Caco-2 (cell line): ENCODE measurements at regions of chrX and their contacts with region 1.

Region 1: DNA sequence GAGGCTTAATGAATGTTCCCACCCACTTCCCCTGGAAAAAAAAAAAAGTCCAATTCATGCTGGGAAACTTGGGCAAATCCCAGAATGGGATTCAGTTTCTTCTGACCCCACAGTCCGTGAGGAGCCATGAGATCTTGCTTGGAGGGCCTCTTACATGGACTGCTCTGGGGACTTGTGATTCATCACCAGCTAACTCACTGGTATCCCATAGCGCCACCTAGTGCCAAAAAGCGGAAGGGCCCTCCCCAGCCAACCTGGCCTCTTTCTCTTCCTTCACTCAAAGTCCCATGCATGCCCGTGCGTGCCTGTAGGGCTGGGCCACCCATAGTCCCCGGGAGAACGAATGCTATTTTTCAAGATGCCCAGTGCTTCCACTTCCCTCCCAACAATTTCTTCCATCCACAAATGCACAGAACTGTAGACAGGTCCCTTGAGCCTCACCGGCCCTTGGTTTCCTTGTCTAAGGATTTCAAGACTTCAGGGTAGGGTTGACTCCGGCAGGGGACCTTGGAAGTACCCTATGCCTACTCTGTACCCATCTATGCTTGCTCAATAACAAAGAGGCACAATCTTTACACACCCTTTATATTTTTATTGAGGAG is 5.1 kb downstream of the RTL5 start:
- DNase-seq: peak; percentile 77 to 81
- H3K4me3 ChIP-seq: no peak overlapping the region
- H3K4me3 Mint-ChIP-seq: no peak overlapping the region
- H3K27ac Mint-ChIP-seq: no peak overlapping the region
- H3K4me1 ChIP-seq: no peaks in the 10 kb centered on the region
- H3K4me1 Mint-ChIP-seq: no peaks in the 10 kb centered on the region
- H3K27me3 ChIP-seq: no peaks in the 10 kb centered on the region
- H3K27me3 Mint-ChIP-seq: peaks cover 4% of the 10 kb centered on the region
- CTCF ChIP-seq: peak; percentile 50 to 78

Region 2: DNA sequence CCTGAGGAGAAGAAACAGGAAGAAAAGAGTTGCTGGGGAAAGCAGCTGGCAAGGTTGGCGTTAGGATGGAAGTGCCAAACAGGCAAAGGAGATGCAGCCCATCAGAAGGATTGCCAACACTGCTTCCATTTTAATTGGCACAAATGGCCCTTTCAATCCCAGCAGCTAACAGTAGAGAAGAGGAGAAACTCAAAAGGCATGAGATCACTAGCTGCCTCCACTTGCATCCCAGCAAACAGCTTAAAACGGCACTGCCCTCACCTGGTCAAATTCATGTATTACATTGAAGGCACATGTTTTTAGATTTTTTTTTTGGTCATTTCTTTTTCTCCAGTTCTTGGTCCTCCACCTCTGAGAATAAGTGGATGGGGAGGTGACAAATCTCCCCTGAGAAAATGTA is 474.2 kb before region 1 on chrX:
- CTCF ChIA-PET with region 1: no interaction called
- POLR2A ChIA-PET with region 1: no interaction called
- intact Hi-C with region 1: no loop called
- DNase-seq: peak; percentile 47 to 52
- H3K4me3 ChIP-seq: no peak overlapping the region
- H3K4me3 Mint-ChIP-seq: no peak overlapping the region
- H3K27ac Mint-ChIP-seq: no peak overlapping the region
- H3K4me1 ChIP-seq: no peaks in the 10 kb centered on the region
- H3K4me1 Mint-ChIP-seq: no peaks in the 10 kb centered on the region
- H3K27me3 ChIP-seq: no peaks in the 10 kb centered on the region
- H3K27me3 Mint-ChIP-seq: no peaks in the 10 kb centered on the region
- CTCF ChIP-seq: peak; percentile 35 to 53

Region 3: DNA sequence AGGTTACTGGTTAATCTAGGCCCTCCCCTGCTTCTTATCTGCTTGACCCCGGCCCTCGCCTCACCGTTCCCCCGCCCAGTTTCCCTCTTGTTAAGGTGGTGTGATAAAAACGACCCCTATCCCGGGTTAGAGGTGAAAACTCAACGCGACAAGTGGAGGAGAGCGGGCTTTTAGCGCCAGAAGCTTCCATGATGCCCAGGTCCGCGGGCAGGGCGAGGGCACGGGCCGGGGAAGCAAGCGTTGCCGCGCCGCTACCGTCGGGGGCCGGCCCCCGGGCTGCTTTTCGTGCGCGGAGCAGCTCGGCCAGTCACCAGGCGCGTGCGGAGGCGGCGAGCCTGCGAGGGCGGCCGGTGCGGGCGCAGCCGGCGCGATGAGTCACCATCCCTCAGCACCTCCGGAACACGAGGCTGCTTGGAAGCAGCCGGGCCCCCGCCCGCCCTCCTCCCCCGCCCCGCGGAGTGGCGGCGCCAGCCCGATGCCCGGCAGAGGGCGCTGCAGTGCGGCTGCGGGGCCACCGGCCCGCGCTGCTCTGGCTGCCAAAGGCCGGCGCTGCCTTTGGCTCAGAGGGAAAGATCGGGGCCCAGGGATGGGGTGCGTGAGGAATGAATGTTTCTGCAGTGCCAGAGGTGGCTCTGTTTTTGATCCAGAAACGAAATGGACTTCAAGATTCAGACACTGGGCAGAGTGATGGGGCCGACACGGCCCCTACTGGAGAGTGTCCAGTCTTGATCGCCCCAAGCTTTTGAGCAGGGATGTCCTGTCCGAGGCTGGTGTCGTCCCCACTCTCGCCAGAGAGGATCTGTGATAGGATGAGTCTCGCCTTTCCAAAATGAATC is 108.1 kb before region 1 on chrX:
- CTCF ChIA-PET with region 1: interaction called, 8 read pairs
- POLR2A ChIA-PET with region 1: no interaction called
- intact Hi-C with region 1: loop called (anchors 1 kb)
- DNase-seq: peak; percentile 81 to 85
- H3K4me3 ChIP-seq: peak overlapping the region; percentile 45
- H3K4me3 Mint-ChIP-seq: peak overlapping the region; percentile 64
- H3K27ac Mint-ChIP-seq: no peak overlapping the region
- H3K4me1 ChIP-seq: 0 out of 2 replicates have a peak, but pooled peaks cover 7% of the 10 kb centered on the region
- H3K4me1 Mint-ChIP-seq: peaks cover 6% of the 10 kb centered on the region
- H3K27me3 ChIP-seq: no peaks in the 10 kb centered on the region
- H3K27me3 Mint-ChIP-seq: no peaks in the 10 kb centered on the region
- CTCF ChIP-seq: peak; percentile 43 to 73

Region 4: GRCh38 chrX:72079607-72080006 is 47.0 kb before region 1 on chrX:
- CTCF ChIA-PET with region 1: interaction called, 3 read pairs
- POLR2A ChIA-PET with region 1: no interaction called
- intact Hi-C with region 1: loop called (anchors 5 kb)
- DNase-seq: no peak
- H3K4me3 ChIP-seq: no peak overlapping the region
- H3K4me3 Mint-ChIP-seq: no peak overlapping the region
- H3K27ac Mint-ChIP-seq: no peak overlapping the region
- H3K4me1 ChIP-seq: peaks cover 13% of the 10 kb centered on the region
- H3K4me1 Mint-ChIP-seq: peaks cover 10% of the 10 kb centered on the region
- H3K27me3 ChIP-seq: no peaks in the 10 kb centered on the region
- H3K27me3 Mint-ChIP-seq: no peaks in the 10 kb centered on the region
- CTCF ChIP-seq: no peak